PC-9 (cell line): ENCODE measurements at regions of chr3 and their contacts with region 1.

Region 1: DNA sequence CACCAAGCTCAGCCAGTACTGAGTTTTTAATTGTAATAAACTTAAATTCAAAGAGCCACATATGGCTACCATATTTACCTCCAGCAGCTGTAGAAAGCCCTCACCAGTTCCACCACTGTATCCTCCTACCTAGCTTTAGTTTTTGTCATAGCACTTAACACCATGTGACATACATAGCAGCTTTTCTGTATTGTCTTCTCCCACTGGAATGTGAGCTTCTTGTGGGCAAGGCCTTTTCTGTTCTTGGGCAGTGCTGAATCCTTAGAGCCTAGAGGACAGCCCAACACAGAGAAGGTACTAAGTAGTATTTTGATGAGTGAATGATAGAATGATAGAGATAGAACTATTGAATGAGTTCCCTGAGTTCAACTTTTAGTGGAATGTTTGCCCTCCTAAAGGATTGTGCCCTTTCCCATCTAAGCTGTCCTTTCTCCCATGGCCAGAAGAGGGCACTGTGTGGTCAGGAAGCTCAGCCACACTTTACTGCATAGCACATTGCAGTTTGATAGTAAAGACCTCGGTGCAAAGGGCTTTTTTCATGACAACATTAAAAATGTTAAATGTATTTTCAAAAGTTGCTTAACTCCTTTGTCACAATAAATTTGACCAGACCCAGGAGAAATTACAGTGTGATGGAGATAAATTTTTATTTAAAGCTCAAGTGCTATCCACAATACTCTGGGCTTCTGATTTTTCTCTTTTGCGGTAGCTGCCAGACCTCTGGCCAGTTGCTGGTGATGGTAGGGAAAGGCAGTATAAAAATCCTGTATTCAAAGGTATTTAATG is 115.8 kb downstream of the GHSR start:
- DNase-seq: peak; percentile 56 to 66
- H3K4me3 ChIP-seq: no peak overlapping the region
- H3K27ac ChIP-seq: no peak overlapping the region; the same call in 1 of the 2 replicates
- H3K4me1 ChIP-seq: 0 out of 2 replicates have a peak, but pooled peaks cover 7% of the 10 kb centered on the region
- H3K27me3 ChIP-seq: no peaks in the 10 kb centered on the region
- CTCF ChIP-seq: peak; percentile 98

Region 2: GRCh38 chr3:170717410-170718402 is 1614.7 kb before region 1 on chr3:
- CTCF ChIA-PET with region 1: no interaction called
- POLR2A ChIA-PET with region 1: no interaction called
- intact Hi-C with region 1: no loop called
- DNase-seq: peak; percentile 60 to 63
- H3K4me3 ChIP-seq: no peak overlapping the region
- H3K27ac ChIP-seq: no peak overlapping the region
- H3K4me1 ChIP-seq: peaks cover 26% of the 10 kb centered on the region
- H3K27me3 ChIP-seq: no peaks in the 10 kb centered on the region
- CTCF ChIP-seq: no peak

Region 3: GRCh38 chr3:170953229-170953628 is 1379.2 kb before region 1 on chr3:
- CTCF ChIA-PET with region 1: interaction called, 12 read pairs
- POLR2A ChIA-PET with region 1: no interaction called
- intact Hi-C with region 1: no loop called
- DNase-seq: no peak
- H3K4me3 ChIP-seq: no peak overlapping the region
- H3K27ac ChIP-seq: no peak overlapping the region
- H3K4me1 ChIP-seq: no peaks in the 10 kb centered on the region
- H3K27me3 ChIP-seq: no peaks in the 10 kb centered on the region
- CTCF ChIP-seq: no peak

Region 4: GRCh38 chr3:172476347-172476746 is 143.9 kb after region 1 on chr3:
- CTCF ChIA-PET with region 1: interaction called, 15 read pairs
- POLR2A ChIA-PET with region 1: no interaction called
- intact Hi-C with region 1: loop called (anchors 1 kb)
- DNase-seq: no peak
- H3K4me3 ChIP-seq: peak overlapping the region; percentile 69
- H3K27ac ChIP-seq: no peak overlapping the region
- H3K4me1 ChIP-seq: 0 out of 2 replicates have a peak, but pooled peaks cover 5% of the 10 kb centered on the region
- H3K27me3 ChIP-seq: no peaks in the 10 kb centered on the region
- CTCF ChIP-seq: no peak